Right lobe of liver (tissue), 6 donors: ENCODE measurements at regions of chr7 and their contacts with region 1.

Region 1: DNA sequence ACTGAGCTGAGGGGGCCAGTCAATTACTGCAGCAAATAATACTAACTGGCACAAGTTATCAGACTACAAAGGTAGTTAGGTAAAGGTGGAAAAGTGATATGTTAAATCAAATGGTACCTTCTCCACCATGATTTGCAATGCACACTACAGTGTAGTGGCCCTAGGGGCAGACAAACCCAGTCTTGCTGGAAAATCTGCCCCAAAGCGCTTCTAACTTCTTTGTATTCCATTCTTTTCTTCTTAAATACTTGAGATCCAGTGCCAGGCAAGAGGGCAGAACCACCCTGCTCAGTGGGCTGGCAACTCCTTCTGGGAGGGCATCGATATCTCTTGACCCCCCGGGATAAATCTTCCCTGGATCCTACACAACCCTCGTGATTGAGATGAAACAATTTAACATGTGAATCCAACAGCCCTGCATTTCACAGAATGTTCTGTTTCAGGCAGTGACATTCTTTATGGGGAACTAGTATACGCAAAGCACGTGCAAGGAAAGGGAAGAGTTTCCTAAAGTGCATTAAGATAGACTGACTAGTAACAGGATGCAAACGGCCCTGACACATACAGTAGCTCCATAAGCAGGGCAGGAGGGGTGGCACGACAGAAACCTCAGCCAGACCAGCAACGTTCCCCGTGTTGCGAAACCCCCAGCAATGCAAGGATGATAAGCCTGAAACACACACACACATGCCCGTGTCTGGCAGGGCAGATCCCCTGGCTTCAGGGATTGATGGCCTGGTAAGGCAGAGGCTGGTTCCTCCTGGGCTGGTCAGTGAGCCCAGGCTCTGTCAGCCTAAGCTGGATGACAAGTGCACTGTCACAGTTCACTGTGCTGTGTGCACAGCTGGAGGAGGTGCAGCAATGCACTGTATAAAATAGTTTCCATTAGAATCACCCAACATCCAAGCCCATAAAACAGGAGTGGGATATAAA is 89.2 kb downstream of the GSAP start:
- DNase-seq: peak in 2 of 3 donors; percentile 54 to 57
- ATAC-seq: peak; percentile 34 to 60 (median 47)
- H3K4me3 ChIP-seq: no peak overlapping the region
- H3K27ac ChIP-seq: no peak overlapping the region
- H3K4me1 ChIP-seq: peaks cover 0 to 4% (median 0%) of the 10 kb centered on the region in 4 donors
- H3K27me3 ChIP-seq: no peaks in the 10 kb centered on the region
- CTCF ChIP-seq: no peak
- POLR2A ChIP-seq: no peak

Region 2: GRCh38 chr7:77258014-77258413 is 68.9 kb before region 1 on chr7:
- intact Hi-C with region 1: loop called in 1 of 2 experiments (anchors 10 kb)
- DNase-seq: no peak
- ATAC-seq: no peak
- H3K4me3 ChIP-seq: no peak overlapping the region
- H3K27ac ChIP-seq: no peak overlapping the region
- H3K4me1 ChIP-seq: no peaks in the 10 kb centered on the region
- H3K27me3 ChIP-seq: no peaks in the 10 kb centered on the region
- CTCF ChIP-seq: no peak
- POLR2A ChIP-seq: no peak

Region 3: GRCh38 chr7:77393269-77393668 is 66.3 kb after region 1 on chr7:
- intact Hi-C with region 1: no loop called
- DNase-seq: no peak
- ATAC-seq: peak in 1 of 4 donors; percentile 87
- H3K4me3 ChIP-seq: no peak overlapping the region
- H3K27ac ChIP-seq: no peak overlapping the region
- H3K4me1 ChIP-seq: no peaks in the 10 kb centered on the region
- H3K27me3 ChIP-seq: no peaks in the 10 kb centered on the region
- CTCF ChIP-seq: no peak
- POLR2A ChIP-seq: no peak